ENCODE measurements at regions of chr14 and their contacts with region 1.

Region 1: GRCh38 chr14:23446291-23446851 is 10.9 kb upstream of the MYH7 start:
- DNase-seq: peak; percentile 59

Region 2: DNA sequence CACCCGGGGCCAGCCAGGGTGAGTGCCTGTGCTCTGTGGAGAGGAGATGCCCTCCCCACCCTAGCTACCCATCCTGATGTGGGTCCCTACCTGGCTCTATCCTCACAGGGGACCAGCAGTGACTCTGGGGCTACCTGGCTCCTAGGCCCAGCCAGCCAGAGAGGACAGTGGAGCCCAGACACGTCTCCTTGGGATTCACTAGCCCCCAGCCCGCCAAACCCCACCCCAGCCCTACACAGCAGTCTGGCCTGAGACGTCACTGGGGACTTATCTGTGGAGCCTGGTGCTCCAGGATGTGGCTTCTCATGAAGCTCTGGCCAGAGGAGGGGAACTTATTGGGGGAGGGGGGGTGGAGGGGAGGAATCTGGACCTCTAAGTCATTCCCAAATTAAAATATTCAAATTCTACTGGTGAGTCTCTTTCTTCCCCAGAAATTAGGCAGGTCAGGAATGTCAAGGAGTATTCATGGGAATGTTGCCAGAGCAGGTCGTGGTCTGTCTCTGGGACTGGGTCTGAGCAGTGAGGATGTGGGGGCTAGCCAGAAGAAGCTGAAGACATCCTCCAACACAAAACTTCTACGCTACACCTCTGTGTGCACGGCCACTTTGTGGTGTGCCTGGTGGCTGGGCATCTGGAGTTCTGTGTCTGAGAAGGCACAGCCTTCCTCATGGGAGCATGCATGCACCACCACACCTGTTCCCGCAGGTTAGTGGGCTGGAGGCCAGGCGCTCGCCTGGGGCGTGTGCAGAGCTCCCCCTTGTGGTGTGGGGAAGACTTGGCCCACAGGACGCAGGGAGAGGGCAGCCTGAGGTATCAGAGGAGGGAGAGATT is 66.8 kb before region 1 on chr14:
- intact Hi-C with region 1: loop called (anchors 5 kb)
- DNase-seq: no peak

Region 3: DNA sequence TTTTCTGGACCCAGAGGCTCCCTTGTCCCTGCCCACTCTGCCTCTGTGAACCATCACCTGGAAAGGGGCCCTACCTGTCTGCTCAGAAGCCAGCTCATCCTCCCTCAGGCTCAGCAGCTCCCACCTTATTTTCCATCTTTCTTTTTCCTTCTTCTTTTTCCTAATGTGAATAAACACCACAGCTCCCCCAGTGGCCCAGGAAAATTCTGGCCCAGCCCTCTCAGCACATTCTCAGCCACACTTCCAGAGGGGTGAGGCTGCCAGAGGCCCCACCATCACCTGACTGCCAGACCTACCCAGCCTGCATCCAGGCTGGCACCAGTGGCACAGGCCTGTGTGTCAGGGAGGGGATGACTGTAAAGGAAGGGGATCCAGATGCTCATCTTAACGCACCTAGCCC is 82.2 kb after region 1 on chr14:
- intact Hi-C with region 1: no loop called
- DNase-seq: no peak

Measured in cardiac septum (tissue), 1 donor.